HEK293T (cell line): ENCODE measurements at regions of chr6 and their contacts with region 1.

Region 1: DNA sequence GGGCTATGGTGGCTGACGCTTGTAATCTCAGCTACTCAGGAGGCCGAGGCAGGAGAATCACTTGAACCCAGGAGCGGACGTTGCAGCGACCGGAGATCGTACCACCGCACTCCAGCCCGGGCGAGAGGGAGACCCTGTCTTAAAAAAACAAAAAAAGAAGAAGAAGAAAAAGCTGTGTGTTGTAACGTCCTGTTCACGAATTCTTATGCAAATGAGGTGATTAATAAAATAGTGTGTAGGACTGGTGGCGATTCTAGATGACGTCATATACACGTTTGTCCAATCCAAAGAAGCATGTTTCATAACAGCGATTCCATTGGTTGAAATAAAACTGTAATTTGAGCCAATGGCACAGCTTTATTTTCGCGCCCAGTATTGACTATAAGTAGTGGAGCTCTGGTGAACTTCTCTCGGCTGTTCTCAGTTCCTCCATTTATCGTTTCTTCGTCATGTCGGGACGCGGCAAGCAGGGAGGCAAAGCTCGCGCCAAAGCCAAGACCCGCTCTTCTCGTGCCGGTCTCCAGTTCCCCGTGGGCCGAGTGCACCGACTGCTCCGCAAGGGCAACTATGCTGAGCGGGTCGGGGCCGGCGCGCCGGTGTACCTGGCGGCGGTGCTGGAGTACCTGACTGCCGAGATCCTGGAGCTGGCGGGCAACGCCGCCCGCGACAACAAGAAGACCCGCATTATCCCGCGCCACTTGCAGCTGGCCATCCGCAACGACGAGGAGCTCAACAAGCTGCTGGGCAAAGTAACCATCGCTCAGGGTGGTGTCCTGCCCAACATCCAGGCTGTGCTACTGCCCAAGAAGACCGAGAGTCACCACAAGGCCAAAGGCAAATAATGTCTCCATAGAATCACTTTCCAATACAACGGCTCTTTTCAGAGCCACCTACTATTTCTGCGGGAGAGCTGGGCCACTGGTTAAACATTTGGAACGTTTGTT is 47.0 kb downstream of the OR2B2 start:
- DNase-seq: peak; percentile 80

Region 2: DNA sequence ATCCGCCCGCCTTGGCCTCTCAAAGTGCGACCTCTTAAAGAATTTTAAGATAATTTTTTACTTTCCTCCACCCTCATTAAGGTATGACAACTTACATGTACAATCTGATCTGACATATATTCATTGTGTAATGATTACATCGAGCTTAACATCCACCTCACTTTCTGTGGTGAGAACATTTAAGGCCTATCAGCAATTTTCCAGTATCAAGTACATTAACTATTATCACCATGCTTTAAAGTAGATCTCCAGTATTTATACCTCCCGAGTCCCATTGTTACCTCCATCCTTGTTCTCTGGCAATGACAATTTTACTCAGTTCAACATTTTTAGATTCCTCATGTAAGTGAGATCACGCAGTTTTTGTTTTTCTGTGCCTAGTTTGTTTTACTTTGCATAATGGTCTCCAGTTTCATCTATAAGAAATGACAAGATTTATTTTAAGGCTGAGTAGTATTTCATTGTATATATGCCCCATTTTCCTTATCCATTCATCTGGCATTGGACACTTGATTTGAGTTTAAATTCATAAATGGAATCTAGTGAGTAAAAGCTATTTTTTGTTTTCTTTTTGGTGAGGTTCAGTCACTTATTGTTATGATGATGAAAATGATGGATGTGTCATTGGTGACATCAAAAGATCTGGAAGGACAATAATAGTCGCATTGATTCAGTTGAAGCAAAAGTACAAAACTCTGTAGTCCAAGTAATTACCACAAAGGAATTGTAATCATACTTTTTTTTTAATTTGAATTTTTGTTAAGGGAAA is 40.0 kb before region 1 on chr6:
- CTCF ChIA-PET with region 1: no interaction called
- POLR2A ChIA-PET with region 1: interaction called, 24 read pairs
- DNase-seq: no peak

Region 3: GRCh38 chr6:27847706-27848105 is 17.5 kb before region 1 on chr6:
- CTCF ChIA-PET with region 1: no interaction called
- POLR2A ChIA-PET with region 1: interaction called, 12 read pairs
- DNase-seq: no peak

Region 4: GRCh38 chr6:27879837-27880236 is 14.7 kb after region 1 on chr6:
- CTCF ChIA-PET with region 1: no interaction called
- POLR2A ChIA-PET with region 1: interaction called, 10 read pairs
- DNase-seq: no peak

Region 5: GRCh38 chr6:27962506-27962905 is 97.3 kb after region 1 on chr6:
- CTCF ChIA-PET with region 1: no interaction called
- POLR2A ChIA-PET with region 1: no interaction called
- DNase-seq: no peak